PC-9 (cell line): ENCODE measurements at regions of chr2 and their contacts with region 1.

Region 1: GRCh38 chr2:75208738-75209137 is 9.4 kb upstream of the TACR1 start:
- DNase-seq: peak; percentile 44 to 78
- H3K4me3 ChIP-seq: peak overlapping the region; percentile 36; the same call in 1 of the 2 replicates
- H3K27ac ChIP-seq: peak overlapping the region; percentile 47
- H3K4me1 ChIP-seq: peaks cover 17% of the 10 kb centered on the region
- H3K27me3 ChIP-seq: no peaks in the 10 kb centered on the region
- CTCF ChIP-seq: no peak

Region 2: DNA sequence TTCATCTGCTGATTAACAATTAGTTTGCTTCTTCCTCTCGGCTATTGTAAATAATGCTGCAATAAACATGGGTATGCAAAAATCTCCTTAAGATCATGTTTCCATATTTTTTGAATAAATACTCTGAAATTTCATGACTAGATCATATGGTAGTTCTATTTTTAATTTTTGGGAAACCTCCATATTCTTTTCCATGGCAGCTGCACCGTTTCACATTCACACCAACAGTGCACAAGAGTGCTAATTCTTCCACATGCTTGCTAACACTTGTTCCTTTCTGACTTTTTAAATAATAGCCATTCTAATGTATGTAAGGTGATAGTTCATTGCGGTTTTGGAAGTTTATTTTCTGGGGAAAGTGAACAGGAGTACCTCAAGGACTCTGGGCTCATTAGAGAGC is 43.2 kb after region 1 on chr2:
- CTCF ChIA-PET with region 1: no interaction called
- POLR2A ChIA-PET with region 1: no interaction called
- intact Hi-C with region 1: loop called (anchors 1 kb)
- DNase-seq: no peak
- H3K4me3 ChIP-seq: no peak overlapping the region
- H3K27ac ChIP-seq: no peak overlapping the region
- H3K4me1 ChIP-seq: no peaks in the 10 kb centered on the region
- H3K27me3 ChIP-seq: no peaks in the 10 kb centered on the region
- CTCF ChIP-seq: no peak